AG04450 (cell line): ENCODE measurements at regions of chr22 and their contacts with region 1.

Region 1: GRCh38 chr22:27405672-27406388 is 395.7 kb downstream of the MN1 start:
- DNase-seq: no peak
- H3K4me3 ChIP-seq: no peak overlapping the region
- H3K27ac ChIP-seq: no peak overlapping the region
- H3K27me3 ChIP-seq: peaks cover 19% of the 10 kb centered on the region
- CTCF ChIP-seq: peak; percentile 79

Region 2: DNA sequence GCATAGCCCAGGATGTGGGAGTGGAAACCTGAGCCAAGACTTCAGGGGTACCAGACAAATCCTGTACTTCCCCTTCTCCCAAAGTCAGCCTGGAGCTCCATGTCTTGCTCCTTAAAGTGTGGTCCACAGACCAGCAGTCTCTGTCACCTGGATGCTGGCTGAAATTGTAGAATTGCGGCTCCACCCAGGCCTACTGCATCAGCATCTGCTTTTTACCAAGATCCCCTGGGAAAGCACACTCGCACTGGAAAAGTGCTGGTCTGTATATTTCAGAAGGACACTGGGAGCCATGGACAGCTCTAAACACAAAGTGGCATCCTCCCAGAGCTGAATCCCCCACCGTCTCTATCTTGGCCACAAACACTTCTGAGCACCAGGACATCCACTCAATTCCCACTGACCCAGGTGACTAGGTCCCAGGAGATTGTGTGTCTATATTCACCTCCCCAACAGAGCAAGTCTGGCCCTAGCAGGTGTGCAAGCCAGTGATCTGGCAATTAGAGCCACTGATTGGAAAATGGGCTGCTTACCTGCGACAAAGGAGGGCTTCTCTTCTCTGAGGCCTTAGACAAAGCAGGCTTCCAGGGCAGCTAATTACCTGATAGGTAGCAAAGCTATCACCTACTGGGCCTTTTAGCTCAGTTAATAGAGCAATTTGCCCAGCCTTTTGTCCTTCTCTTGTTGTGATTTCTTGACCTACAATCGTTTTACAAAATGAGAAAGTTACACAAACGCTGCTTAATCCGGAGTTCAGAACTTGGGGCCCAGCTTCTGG is 47.5 kb before region 1 on chr22:
- CTCF ChIA-PET with region 1: interaction called, 10 read pairs
- POLR2A ChIA-PET with region 1: no interaction called
- DNase-seq: no peak
- H3K4me3 ChIP-seq: no peak overlapping the region
- H3K27ac ChIP-seq: no peak overlapping the region
- H3K27me3 ChIP-seq: peaks cover 17% of the 10 kb centered on the region
- CTCF ChIP-seq: no peak

Region 3: DNA sequence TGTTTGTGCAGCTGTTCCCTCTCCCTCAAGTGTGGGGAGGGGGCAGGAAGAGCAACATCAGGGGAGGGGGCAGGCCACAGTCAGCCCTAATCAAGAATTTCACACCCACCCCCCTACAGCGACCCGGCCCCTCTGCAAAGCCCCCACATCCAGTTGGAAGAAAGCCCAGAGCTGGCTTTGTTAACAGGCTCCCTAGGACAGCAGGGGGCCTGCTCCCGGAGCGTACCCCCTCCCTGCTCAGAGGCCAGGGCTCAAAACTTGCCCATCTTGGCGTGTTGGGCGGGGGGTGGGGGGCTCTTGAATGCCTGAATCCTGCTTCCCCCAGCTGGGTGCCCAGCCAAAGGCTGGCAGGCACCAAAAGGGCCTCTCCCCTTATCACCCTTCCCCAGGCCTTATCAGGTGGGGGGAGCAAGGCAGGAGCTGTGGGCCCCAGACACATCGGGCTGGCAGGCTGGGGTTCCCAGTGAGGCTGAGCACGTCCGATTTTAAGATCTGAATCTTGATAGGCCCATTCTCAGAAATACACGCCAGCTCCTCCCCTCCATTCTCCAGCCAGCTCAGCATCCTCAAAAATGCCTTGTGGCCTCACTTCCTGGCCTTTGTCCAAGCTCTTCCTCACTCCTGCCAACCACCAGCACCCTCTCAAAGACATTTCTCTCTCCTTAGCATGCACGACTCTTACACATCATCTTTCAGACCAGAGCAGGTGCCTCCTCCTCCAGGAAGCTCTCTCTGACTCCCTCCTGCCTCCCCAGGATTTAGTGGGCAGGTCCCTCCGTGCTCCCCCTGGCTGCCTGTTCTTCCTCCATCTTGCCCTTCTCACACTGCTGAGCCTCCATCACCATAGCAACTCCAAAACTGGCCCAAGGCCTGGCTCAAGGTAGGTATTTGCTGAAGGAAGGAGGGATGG is 10.9 kb after region 1 on chr22:
- CTCF ChIA-PET with region 1: interaction called, 28 read pairs
- POLR2A ChIA-PET with region 1: no interaction called
- DNase-seq: peak; percentile 68
- H3K4me3 ChIP-seq: no peak overlapping the region
- H3K27ac ChIP-seq: no peak overlapping the region
- H3K27me3 ChIP-seq: peaks cover 27% of the 10 kb centered on the region
- CTCF ChIP-seq: peak; percentile 21

Region 4: DNA sequence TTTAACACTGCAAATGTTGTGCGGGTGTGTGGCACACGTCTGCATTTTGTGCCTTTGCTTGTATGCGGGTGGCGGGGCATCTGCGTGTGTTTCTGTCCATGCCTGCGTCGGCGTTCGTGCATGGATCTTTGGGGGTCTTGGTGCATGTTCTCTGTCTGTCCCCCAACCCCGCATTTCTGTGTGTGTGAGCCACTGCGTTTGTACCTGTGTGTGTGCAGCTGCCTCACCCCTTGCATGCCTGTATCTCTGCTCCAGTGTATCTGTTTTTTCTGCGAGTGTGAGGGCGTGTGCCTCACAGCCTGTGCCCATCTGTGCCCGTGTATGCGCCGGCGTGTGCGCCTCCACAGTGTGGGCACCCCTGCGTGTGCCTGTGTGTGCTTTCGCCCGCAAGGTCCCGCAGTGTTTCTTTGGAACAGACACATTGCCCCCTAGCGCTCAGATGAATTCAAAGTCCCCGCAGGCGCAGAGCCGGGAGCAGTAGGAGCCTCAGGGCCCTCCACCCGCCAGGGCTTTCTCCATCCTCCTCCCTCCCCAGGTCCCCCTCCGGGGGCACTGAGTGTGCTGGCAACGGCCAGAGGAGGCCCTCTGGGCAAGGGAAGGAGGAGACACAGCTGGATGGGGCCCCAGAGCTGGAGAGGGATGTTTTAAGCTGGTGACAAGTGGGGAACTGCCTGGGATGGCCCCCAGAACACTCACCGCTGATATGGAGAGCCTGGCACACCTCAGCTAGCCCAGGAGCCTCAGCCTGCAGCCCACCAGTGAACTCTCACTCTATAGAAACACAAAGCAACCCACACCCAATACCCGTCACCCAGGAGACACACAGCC is 398.9 kb after region 1 on chr22:
- CTCF ChIA-PET with region 1: interaction called, 11 read pairs
- POLR2A ChIA-PET with region 1: no interaction called
- DNase-seq: peak; percentile 16
- H3K4me3 ChIP-seq: no peak overlapping the region
- H3K27ac ChIP-seq: no peak overlapping the region
- H3K27me3 ChIP-seq: peaks cover 10% of the 10 kb centered on the region
- CTCF ChIP-seq: peak; percentile 76